ENCODE measurements at regions of chr5 and their contacts with region 1.

Region 1: DNA sequence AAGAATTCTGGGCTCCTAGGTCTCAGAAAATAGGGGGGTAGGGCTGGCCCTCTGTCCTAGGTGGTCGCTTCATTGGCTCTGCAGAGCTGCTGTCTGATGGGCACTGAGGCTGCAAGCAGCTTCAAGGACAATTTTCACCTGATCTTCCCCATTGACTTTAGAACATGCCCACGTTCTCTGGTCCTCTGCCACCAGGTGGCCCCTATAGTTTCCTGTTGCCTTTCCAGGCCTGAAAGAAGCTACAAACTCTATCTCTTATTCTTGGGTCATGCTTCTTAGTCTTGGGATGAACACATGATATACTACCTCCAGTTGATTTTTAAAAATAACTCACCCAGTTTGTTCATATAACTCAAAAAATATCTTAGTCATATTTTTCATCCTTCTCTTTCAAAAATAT is 26.3 kb downstream of the SPZ1 start:
- DNase-seq: peak; percentile 23
- H3K4me3 ChIP-seq: no peak overlapping the region
- H3K27ac ChIP-seq: no peak overlapping the region
- H3K4me1 ChIP-seq: no peaks in the 10 kb centered on the region
- H3K27me3 ChIP-seq: no peaks in the 10 kb centered on the region
- CTCF ChIP-seq: peak; percentile 31 to 64

Region 2: DNA sequence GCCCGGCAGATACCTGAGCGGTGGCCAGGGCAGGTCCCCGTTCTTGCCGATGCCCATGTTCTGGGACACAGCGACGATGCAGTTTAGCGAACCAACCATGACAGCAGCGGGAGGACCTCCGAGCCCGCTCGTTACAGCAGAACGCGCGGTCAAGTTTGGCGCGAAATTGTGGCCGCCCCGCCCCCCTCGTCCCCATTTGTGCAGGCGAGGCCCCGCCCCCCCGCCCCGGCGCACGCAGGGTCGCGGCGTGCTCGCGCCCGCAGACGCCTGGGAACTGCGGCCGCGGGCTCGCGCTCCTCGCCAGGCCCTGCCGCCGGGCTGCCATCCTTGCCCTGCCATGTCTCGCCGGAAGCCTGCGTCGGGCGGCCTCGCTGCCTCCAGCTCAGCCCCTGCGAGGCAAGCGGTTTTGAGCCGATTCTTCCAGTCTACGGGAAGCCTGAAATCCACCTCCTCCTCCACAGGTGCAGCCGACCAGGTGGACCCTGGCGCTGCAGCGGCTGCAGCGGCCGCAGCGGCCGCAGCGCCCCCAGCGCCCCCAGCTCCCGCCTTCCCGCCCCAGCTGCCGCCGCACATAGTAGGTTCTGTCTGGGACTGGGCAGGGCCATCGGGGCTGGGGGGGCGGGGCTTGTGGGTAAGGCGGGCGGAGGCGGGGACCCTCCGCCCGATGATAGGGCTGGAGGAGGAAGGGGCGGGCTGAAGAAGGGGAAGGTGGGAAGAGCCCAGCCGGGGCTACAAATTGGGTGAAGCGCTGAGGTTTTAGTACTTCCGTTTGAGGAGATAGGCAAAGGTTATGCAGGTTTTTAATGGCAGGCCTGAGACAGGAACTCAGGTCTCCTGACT is 308.6 kb after region 1 on chr5 and contains the starts of genes DHFR and MSH3:
- CTCF ChIA-PET with region 1: no interaction called
- dilution Hi-C with region 1: no loop called
- in situ Hi-C with region 1: no loop called
- intact Hi-C with region 1: loop called (anchors 1 kb)
- DNase-seq: peak; percentile 91
- H3K4me3 ChIP-seq: peak within 1 kb of the TSS; percentile 83 to 96 (median 92)
- H3K27ac ChIP-seq: peak within 1 kb of the TSS; percentile 62
- H3K4me1 ChIP-seq: peaks cover 10% of the 10 kb centered on the region
- H3K27me3 ChIP-seq: no peaks in the 10 kb centered on the region
- CTCF ChIP-seq: peak in 1 of 2 donors; percentile 41
- total RNA-seq, gene DHFR: 6.2 to 30.0 TPM
- total RNA-seq, gene MSH3: 20.0 TPM

Measured in mammary epithelial cell (primary cell).